ENCODE measurements at regions of chr4 and their contacts with region 1.

Region 1: DNA sequence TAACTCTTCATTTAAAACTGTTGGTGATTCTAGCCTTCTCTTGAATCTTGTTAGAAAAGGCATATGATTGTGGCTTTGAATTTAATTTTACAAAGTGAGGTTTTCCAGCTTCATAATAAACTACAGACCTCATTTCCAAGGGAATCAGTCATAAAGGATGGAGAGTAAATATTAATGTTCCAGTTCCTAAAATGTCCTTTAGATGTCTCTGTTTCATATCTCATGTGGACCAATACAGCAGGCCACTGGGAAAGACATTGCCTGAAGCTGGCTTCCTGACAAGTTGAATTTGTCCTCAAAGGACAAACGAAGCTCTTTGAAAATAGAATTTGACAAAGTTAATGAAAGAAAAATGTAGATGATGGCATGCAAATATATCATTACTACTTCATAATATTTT is 125.4 kb downstream of the ZNF330 start:
- DNase-seq: no peak
- H3K4me3 ChIP-seq: no peak overlapping the region
- H3K27me3 ChIP-seq: no peaks in the 10 kb centered on the region
- CTCF ChIP-seq: peak; percentile 55

Region 2: DNA sequence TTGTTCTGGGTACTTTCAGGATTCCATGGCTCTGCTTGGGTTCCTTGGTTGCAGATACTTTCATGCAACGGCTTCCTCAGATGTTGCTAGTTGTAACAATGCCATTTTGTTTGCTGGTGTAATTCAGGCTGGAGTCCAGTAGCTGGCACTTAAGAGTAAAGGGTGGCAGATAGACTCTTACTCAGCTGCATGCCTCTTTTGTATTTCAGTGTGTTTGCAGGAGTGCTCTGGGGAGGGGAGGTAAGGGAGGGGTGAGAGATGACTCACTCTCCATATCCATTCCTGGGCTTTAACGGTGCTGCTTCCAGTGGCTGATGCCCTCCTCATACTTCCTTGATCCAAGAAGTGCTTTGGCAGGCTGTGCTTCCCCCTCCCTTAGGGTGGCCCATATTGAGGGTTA is 29.7 kb after region 1 on chr4:
- CTCF ChIA-PET with region 1: interaction called, 10 read pairs
- POLR2A ChIA-PET with region 1: no interaction called
- DNase-seq: peak; percentile 55
- H3K4me3 ChIP-seq: no peak overlapping the region
- H3K27me3 ChIP-seq: no peaks in the 10 kb centered on the region
- CTCF ChIP-seq: peak; percentile 78

Measured in BJ (cell line).